GM12878 (cell line): ENCODE measurements at regions of chr11 and their contacts with region 1.

Region 1: GRCh38 chr11:61254403-61255025 is 13.5 kb downstream of the PGA5 start:
- DNase-seq: peak; percentile 25
- ATAC-seq: peak; percentile 99
- H3K4me3 ChIP-seq: no peak overlapping the region
- H3K27ac ChIP-seq: no peak overlapping the region
- H3K4me1 ChIP-seq: no peaks in the 10 kb centered on the region
- H3K27me3 ChIP-seq: no peaks in the 10 kb centered on the region
- CTCF ChIP-seq: peak; percentile 93 to 99 (median 96)
- EP300 ChIP-seq: no peak
- POLR2A ChIP-seq: no peak
- RAD21 ChIP-seq: peak; percentile 84

Region 2: DNA sequence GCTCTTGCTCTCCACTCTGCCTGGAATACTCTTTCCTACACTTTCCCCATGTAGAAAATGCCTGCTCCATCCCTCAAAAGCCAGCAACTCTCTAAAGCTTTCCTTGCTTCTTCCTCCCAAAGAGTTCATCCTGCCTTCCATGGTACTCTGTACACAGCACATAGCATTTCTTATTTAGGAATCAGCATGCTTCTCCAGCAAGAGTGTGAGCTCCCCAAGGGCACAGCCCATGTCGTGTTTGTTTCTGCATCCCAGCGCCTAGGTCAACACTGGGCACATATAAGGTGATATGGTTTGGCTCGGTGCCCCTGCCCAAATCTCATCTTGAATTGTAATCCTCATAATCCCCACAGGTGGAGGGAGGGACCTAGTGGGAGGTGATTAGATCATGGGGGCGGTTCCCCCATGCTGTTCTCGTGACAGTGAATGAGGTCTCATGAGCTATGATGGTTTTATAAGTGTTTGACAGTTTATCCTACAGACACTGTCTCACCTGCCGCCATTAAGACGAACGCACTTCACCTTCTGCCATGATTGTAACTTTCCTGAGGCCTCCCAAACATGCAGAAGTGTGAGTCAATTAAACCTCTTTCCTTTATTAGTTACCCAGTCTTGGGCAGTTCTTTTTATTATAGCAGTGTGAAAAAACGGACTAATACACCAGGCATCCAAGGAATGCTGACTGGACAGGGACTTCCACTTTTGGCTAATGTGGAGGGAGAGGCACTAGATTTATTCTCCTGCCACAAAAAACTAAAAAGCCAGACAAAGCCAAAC is 101.5 kb before region 1 on chr11:
- CTCF ChIA-PET with region 1: no interaction called
- POLR2A ChIA-PET with region 1: no interaction called
- RAD21 ChIA-PET with region 1: no interaction called
- SMC1A ChIA-PET with region 1: no interaction called
- in situ Hi-C with region 1: no loop called
- intact Hi-C with region 1: no loop called
- DNase-seq: no peak
- ATAC-seq: no peak
- H3K4me3 ChIP-seq: no peak overlapping the region
- H3K27ac ChIP-seq: no peak overlapping the region
- H3K4me1 ChIP-seq: no peaks in the 10 kb centered on the region
- H3K27me3 ChIP-seq: no peaks in the 10 kb centered on the region
- CTCF ChIP-seq: no peak
- EP300 ChIP-seq: no peak
- POLR2A ChIP-seq: no peak
- RAD21 ChIP-seq: no peak

Region 3: GRCh38 chr11:61294717-61295595 is 40.4 kb after region 1 on chr11 and contains the start of gene VWCE:
- CTCF ChIA-PET with region 1: interaction called, 16 read pairs
- POLR2A ChIA-PET with region 1: no interaction called
- RAD21 ChIA-PET with region 1: interaction called, 9 read pairs
- SMC1A ChIA-PET with region 1: interaction called, 3 read pairs
- in situ Hi-C with region 1: no loop called
- intact Hi-C with region 1: no loop called
- DNase-seq: no peak
- ATAC-seq: peak; percentile 90
- H3K4me3 ChIP-seq: peak within 1 kb of the TSS; percentile 70
- H3K27ac ChIP-seq: peak within 1 kb of the TSS; percentile 67
- H3K4me1 ChIP-seq: peaks cover 28% of the 10 kb centered on the region
- H3K27me3 ChIP-seq: no peaks in the 10 kb centered on the region
- CTCF ChIP-seq: peak; percentile 44 to 57 (median 45); a peak in 5 of 6 replicates
- EP300 ChIP-seq: no peak
- POLR2A ChIP-seq: peak; percentile 68
- RAD21 ChIP-seq: peak; percentile 52
- polyA plus RNA-seq, gene VWCE: 0.10 to 0.29 TPM

Region 4: DNA sequence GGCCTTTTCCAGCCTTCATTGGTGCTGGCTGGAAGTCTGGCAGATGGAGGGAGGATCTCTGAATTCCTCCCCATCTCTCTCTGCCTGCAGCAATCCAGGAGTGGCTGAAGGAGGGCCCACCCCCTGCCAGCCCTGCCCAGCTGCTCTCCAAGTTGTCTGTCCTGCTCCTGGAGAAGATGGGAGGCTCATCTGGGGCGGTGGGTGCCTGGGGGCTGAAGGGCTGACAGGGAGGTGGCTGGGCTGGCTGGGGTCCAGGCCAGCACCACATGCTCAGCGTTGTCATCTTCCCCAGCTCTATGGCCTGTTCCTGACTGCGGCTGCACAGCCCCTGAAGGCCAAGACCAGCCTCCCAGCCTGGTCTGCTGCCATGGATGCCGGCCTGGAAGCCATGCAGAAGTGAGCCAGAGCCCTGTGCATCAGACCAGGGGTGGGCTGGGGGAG is 90.7 kb after region 1 on chr11:
- CTCF ChIA-PET with region 1: no interaction called
- POLR2A ChIA-PET with region 1: no interaction called
- RAD21 ChIA-PET with region 1: no interaction called
- SMC1A ChIA-PET with region 1: no interaction called
- in situ Hi-C with region 1: no loop called
- intact Hi-C with region 1: no loop called
- DNase-seq: no peak
- ATAC-seq: no peak
- H3K4me3 ChIP-seq: no peak overlapping the region
- H3K27ac ChIP-seq: no peak overlapping the region
- H3K4me1 ChIP-seq: no peaks in the 10 kb centered on the region
- H3K27me3 ChIP-seq: no peaks in the 10 kb centered on the region
- CTCF ChIP-seq: no peak
- EP300 ChIP-seq: no peak
- POLR2A ChIP-seq: 0 out of 2 replicates have a peak, but pooled peaks have one; percentile 10
- RAD21 ChIP-seq: no peak